ENCODE measurements at regions of chr11 and their contacts with region 1.

Region 1: DNA sequence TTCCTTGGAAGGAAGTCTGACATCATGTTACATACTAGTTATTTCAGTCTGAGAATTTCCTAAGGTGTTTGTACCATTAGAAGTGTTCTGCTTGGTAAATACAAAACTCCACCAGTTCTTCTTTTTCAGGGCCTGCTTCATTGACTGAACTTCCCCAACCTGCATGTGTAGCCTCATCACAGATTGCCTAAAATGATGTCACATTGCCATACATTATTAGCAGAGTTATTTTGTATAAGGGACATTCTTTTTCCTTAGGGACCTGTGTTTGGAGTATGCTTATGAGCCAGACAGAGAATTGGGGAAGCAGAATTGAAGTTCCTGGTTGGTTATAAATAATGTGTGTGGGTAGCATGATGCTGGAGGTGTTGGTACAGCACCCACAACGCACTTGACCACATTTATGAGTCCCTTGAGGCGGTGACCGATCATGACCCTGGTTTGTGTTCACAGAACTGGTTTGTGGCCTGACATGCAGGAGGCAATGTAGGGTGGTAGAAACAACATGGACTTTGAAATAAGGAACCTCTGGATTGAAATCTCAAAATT is 16.4 kb upstream of the MMP7 start:
- DNase-seq: peak; percentile 93
- ATAC-seq: peak; percentile 81
- H3K4me3 ChIP-seq: no peak overlapping the region
- H3K27ac ChIP-seq: peak overlapping the region; percentile 68; the same call in 1 of the 2 replicates
- H3K4me1 ChIP-seq: peaks cover 37% of the 10 kb centered on the region
- H3K27me3 ChIP-seq: no peaks in the 10 kb centered on the region
- CTCF ChIP-seq: peak in 1 of 3 experiments; percentile 3; a peak in 1 of 6 replicates
- EP300 ChIP-seq: peak; percentile 93 to 95; a peak in 3 of 4 replicates
- POLR2A ChIP-seq: no peak
- RAD21 ChIP-seq: peak; percentile 32; the same call in 1 of the 2 replicates

Region 2: DNA sequence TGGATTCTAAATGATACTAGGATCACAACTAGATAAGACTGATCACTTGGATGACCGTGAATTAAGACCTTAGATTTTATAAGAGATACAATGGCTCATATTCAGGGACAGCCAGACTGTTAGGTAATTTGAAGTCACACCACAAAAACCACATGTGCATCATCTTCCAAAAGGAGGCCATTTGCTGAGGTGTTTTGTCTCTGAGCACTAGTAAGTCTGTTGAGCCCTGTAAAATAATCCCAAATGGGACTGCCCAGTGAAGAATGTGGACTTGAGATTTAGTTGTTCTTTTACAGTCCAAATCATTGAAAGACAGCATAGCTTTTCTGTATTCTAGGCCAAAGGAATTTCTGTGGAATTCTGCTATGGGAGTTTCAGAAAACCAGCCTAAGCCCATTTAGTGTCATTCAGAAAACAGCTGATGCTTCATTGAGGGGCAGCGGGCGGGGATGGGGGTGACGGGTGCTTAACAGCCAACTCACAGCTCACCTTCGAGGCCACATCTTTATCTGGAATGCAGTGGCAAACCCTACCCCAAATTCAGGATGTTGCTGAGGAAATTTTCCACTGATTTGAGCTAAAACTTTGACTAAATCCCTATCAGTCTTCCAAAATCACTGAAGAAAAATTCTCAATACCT is 309.8 kb before region 1 on chr11:
- CTCF ChIA-PET with region 1: no interaction called
- POLR2A ChIA-PET with region 1: no interaction called
- RAD21 ChIA-PET with region 1: no interaction called
- SMC1A ChIA-PET with region 1: no interaction called
- in situ Hi-C with region 1: no loop called
- intact Hi-C with region 1: no loop called
- DNase-seq: no peak
- ATAC-seq: no peak
- H3K4me3 ChIP-seq: no peak overlapping the region
- H3K27ac ChIP-seq: no peak overlapping the region
- H3K4me1 ChIP-seq: no peaks in the 10 kb centered on the region
- H3K27me3 ChIP-seq: no peaks in the 10 kb centered on the region; a peak in 1 of 4 replicates
- CTCF ChIP-seq: no peak
- EP300 ChIP-seq: no peak
- POLR2A ChIP-seq: no peak
- RAD21 ChIP-seq: no peak

Region 3: DNA sequence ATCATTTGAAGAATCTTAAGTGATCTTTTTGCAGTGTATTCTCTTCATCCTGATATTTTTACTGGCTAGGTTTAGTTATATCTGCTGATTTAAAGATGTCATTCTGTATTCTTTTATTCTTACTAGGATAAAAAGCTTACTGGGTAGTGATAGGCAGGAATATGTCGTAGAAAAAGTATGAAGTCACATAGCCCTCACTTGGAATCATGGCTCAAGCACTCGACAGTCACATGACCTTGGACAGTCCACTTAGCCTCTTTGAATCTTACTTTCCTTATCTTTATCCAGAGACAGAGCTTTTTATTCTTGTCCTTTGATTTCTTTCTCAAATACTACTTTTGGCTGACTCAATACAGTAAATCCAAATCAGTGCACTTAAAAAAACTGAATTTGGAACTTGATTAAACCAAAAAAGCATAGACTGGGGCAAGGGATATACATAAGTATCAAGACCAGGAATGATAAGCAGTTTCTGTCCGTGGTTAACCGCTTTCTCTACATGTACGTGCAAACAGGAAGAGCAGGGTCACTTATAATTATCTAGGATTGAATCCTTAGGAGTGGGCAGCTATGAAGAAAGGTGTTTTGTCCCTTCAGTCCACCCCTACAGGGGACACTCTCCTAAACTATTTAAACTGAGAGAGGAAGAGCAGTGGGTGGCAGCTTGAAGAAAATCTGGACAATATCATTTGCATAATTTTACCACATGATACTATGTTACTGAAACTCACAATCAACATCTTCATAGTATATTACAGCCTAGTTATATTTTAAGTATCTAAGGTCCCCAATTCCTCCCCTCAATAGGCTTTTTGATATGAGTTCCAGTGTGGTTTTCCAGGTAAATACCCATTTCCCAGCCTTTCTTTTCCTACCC is 24.4 kb before region 1 on chr11:
- CTCF ChIA-PET with region 1: interaction called, 5 read pairs
- POLR2A ChIA-PET with region 1: interaction called, 3 read pairs
- RAD21 ChIA-PET with region 1: interaction called, 9 read pairs
- SMC1A ChIA-PET with region 1: interaction called, 18 read pairs
- in situ Hi-C with region 1: no loop called
- intact Hi-C with region 1: no loop called
- DNase-seq: no peak
- ATAC-seq: peak; percentile 81
- H3K4me3 ChIP-seq: no peak overlapping the region
- H3K27ac ChIP-seq: no peak overlapping the region
- H3K4me1 ChIP-seq: peaks cover 15% of the 10 kb centered on the region
- H3K27me3 ChIP-seq: no peaks in the 10 kb centered on the region
- CTCF ChIP-seq: no peak
- EP300 ChIP-seq: no peak
- POLR2A ChIP-seq: no peak
- RAD21 ChIP-seq: no peak

Region 4: GRCh38 chr11:102560555-102561011 is 13.6 kb after region 1 on chr11:
- CTCF ChIA-PET with region 1: interaction called, 21 read pairs
- POLR2A ChIA-PET with region 1: interaction called, 41 read pairs
- RAD21 ChIA-PET with region 1: interaction called, 63 read pairs
- SMC1A ChIA-PET with region 1: interaction called, 94 read pairs
- in situ Hi-C with region 1: no loop called
- intact Hi-C with region 1: loop called (anchors 1 kb)
- DNase-seq: peak; percentile 84
- ATAC-seq: peak; percentile 85
- H3K4me3 ChIP-seq: no peak overlapping the region; the same call in 1 of the 2 replicates
- H3K27ac ChIP-seq: peak overlapping the region; percentile 86
- H3K4me1 ChIP-seq: peaks cover 56% of the 10 kb centered on the region
- H3K27me3 ChIP-seq: no peaks in the 10 kb centered on the region
- CTCF ChIP-seq: no peak
- EP300 ChIP-seq: peak; percentile 88 to 97
- POLR2A ChIP-seq: no peak
- RAD21 ChIP-seq: peak; percentile 12; the same call in 1 of the 2 replicates

Region 5: DNA sequence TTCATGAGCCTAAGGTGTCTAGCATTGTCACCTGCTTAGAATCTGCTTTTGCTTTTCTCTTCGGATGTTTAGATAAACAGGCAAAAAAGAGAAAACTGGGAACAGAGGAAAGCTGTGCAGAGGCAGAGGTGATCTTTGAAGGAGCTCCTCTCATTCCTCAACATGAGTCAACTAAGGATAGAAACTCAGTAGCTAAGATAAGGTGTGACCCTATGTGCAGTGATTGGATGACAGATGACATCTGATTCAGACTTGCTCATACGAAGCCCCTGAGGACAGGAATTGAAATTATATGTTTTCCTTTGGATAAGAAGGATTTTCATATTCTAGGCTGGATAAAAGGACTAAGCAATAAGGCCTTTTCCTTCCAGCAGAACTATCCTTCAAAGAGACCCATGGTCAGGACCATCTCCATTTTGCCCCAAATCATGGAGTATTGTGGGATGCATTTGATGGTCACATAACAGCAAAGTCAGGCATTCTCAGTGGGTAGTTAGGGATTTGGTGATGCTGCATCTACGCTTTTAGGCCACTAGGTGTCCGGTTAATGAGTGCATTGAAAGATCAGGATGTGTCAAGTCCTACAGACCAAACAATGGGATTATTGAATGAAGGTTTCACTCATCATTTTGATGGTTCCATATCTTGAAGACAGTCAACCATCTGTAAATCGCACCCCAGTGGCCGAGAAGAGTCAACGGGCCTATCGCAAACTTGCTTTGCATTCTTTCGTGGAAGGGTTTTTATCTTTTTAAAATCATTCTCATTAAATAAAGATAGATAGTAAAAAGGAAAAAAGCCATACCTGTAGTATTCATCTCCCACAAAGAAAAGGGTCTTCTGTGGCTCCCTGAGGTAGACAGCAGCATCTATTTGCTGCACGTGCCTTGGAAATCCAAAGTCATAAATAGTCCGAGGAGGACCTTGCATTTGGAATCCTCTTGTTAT is 45.9 kb after region 1 on chr11:
- CTCF ChIA-PET with region 1: interaction called, 27 read pairs
- POLR2A ChIA-PET with region 1: interaction called, 23 read pairs
- RAD21 ChIA-PET with region 1: interaction called, 17 read pairs
- SMC1A ChIA-PET with region 1: interaction called, 399 read pairs
- in situ Hi-C with region 1: no loop called
- intact Hi-C with region 1: loop called (anchors 2 kb)
- DNase-seq: no peak
- ATAC-seq: peak; percentile 26; the same call in 2 of the 3 replicates
- H3K4me3 ChIP-seq: no peak overlapping the region
- H3K27ac ChIP-seq: no peak overlapping the region
- H3K4me1 ChIP-seq: peaks cover 32% of the 10 kb centered on the region
- H3K27me3 ChIP-seq: no peaks in the 10 kb centered on the region; a peak in 1 of 4 replicates
- CTCF ChIP-seq: peak; percentile 25 to 70 (median 57)
- EP300 ChIP-seq: no peak
- POLR2A ChIP-seq: no peak
- RAD21 ChIP-seq: peak; percentile 28

Region 6: DNA sequence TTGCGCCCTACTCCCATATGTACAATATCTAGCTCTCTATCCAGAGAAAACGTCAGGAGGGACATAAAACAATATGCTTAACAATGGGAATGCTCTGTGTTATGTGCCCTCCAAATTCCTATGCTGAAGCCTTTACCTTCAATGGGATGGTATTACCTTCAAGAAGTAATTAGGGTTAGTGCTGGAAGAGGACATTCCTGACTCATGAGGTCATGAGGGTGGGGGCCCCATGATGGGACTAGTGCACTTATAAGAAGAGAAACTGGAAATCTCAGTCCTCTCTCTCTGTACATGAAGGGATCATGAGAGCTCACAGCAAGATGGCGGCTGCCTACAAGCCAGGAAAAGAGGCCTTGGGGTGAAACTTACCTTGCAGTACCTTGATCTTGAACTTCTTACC is 57.9 kb after region 1 on chr11:
- CTCF ChIA-PET with region 1: interaction called, 65 read pairs
- POLR2A ChIA-PET with region 1: interaction called, 67 read pairs
- RAD21 ChIA-PET with region 1: interaction called, 143 read pairs
- SMC1A ChIA-PET with region 1: interaction called, 399 read pairs
- in situ Hi-C with region 1: no loop called
- intact Hi-C with region 1: no loop called
- DNase-seq: no peak
- ATAC-seq: no peak
- H3K4me3 ChIP-seq: no peak overlapping the region
- H3K27ac ChIP-seq: no peak overlapping the region
- H3K4me1 ChIP-seq: peaks cover 2% of the 10 kb centered on the region; the same call in 1 of the 2 replicates
- H3K27me3 ChIP-seq: no peaks in the 10 kb centered on the region
- CTCF ChIP-seq: no peak
- EP300 ChIP-seq: no peak
- POLR2A ChIP-seq: no peak
- RAD21 ChIP-seq: no peak

Measured in GM12878 (cell line).